Mammary epithelial cell (primary cell): ENCODE measurements at regions of chr7 and their contacts with region 1.

Region 1: DNA sequence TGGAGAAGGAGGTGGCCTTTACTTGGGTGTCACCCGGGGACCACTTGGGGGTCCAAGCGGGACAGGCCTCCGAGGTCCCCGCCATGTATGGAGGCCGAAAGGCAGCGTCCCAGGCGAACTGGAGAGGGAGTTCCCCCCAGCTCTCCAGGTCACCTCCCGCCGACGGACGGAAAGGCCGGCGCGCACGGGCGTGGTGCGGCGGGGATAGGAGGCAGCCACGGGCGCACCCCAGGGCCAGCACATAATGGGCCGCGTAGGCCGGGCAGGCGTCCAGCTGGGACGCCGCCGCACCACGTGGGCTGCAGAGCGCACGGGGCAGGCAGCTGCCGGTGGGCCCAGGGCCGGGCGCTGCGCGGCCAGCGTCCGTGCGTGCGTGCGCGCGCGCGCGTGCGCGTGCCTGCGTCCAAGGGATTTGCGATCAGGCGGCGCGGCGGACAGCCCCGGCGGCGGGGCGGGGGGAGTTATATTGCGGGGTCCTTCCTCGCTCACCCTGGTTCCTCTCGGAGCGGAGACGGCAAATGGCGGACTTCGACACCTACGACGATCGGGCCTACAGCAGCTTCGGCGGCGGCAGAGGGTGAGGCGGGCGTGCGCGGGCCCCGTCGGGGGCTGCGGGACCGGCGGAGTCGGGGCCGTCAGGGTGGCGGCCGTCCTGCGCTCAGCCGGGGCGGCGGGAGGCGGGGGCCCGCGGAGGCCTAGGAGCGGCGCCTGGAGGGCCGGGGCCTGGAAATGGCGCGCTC is at the start of gene EIF4H:
- DNase-seq: peak; percentile 94
- H3K4me3 ChIP-seq: peak within 1 kb of the TSS; percentile 83 to 98 (median 87)
- H3K27ac ChIP-seq: peak within 1 kb of the TSS; percentile 86
- H3K4me1 ChIP-seq: peaks cover 33% of the 10 kb centered on the region
- H3K27me3 ChIP-seq: no peaks in the 10 kb centered on the region
- CTCF ChIP-seq: no peak
- total RNA-seq, gene EIF4H: 252 to 365 TPM

Region 2: GRCh38 chr7:74083117-74083876 is 90.7 kb before region 1 on chr7 and contains the start of gene LIMK1:
- CTCF ChIA-PET with region 1: no interaction called
- dilution Hi-C with region 1: loop called (anchors 5 kb)
- in situ Hi-C with region 1: no loop called
- intact Hi-C with region 1: loop called (anchors 1 kb)
- DNase-seq: peak; percentile 62
- H3K4me3 ChIP-seq: peak within 1 kb of the TSS; percentile 56 to 94 (median 62)
- H3K27ac ChIP-seq: peak within 1 kb of the TSS; percentile 75
- H3K4me1 ChIP-seq: peaks cover 27% of the 10 kb centered on the region
- H3K27me3 ChIP-seq: no peaks in the 10 kb centered on the region
- CTCF ChIP-seq: no peak
- total RNA-seq, gene LIMK1: 23.8 to 31.0 TPM

Region 3: DNA sequence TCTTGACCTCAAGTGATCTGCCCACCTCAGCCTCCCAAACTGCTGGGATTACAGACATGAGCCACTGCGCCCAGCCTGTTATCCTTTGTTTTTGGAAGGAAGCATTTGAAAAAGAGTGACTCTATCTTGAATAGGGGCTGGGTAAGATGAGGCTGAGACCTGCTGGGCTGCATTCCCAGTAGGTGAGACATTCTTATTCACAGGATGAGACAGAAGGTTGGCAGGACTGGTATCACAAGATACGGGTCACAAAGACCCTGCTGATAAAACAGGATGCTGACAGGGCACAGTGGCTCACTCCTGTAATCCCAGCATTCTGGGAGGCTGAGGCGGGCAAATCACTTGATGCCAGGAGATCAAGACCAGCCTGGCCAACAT is 40.4 kb before region 1 on chr7:
- CTCF ChIA-PET with region 1: no interaction called
- dilution Hi-C with region 1: no loop called
- in situ Hi-C with region 1: no loop called
- intact Hi-C with region 1: loop called (anchors 2 kb)
- DNase-seq: peak; percentile 95
- H3K4me3 ChIP-seq: no peak overlapping the region
- H3K27ac ChIP-seq: peak overlapping the region; percentile 33
- H3K4me1 ChIP-seq: peaks cover 13% of the 10 kb centered on the region
- H3K27me3 ChIP-seq: no peaks in the 10 kb centered on the region
- CTCF ChIP-seq: no peak

Region 4: DNA sequence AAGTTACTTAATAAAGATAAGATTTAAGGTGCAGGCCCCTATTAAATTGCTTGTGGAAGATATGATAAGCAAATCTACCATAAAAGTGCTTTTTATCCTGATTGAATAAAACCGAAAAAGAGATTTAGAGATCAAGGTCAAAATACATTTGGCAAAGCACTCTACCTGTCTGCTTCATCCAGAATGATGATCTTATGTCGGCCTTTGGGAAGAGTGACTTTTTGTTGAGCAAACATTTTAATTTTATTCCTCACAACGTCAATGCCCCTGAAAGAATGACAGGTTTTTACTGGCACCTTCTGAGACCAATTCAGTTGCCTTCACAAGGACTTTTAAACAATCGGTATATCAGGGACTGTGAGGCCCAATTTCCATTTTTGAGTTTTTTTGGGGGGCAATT is 72.5 kb after region 1 on chr7:
- CTCF ChIA-PET with region 1: no interaction called
- dilution Hi-C with region 1: loop called (anchors 5 kb)
- in situ Hi-C with region 1: no loop called
- intact Hi-C with region 1: no loop called
- DNase-seq: no peak
- H3K4me3 ChIP-seq: no peak overlapping the region
- H3K27ac ChIP-seq: no peak overlapping the region
- H3K4me1 ChIP-seq: no peaks in the 10 kb centered on the region
- H3K27me3 ChIP-seq: no peaks in the 10 kb centered on the region
- CTCF ChIP-seq: no peak